PC-9 (cell line): ENCODE measurements at regions of chr3 and their contacts with region 1.

Region 1: DNA sequence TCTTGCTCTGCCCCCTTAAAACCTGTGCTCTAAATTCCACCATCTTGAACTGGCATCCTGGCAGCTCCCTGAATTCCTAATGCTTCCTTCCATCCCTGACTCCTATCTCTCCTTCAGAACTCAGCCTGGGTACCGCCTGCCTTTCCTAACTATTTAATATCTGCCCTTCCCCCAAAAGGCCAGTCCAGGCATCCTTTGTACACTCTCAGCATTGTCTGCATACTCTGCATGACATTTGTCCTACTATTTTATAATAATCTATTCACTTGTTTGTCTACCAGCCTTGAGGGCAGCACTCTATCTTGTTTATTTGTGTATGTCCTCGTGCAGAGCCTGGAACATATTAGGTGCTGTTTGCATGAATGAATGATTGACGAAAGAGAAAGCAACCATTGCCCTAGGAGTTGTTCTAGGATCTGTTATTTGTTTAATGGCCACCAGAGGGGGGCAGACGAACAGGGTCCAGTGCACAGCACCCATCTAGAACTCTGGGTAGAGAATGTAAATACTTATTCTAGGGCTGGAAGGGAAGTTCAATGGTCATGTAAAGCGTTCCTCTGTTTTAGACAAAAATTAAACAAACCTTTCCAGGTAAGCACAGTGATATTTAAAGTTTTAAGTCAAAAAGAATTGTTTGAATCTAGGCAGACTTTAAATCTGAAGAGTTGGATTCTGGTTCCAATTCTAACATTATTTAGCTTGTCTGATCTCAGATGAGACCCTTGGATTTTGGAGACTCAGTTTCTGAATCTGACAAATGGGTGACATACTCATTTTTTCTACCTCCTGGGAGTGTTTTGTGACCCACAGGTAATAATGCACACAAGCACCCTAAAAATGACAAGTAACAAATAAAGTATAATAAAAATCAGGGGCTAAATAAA is 125.8 kb upstream of the GALNT15 start:
- DNase-seq: peak; percentile 25 to 36
- H3K4me3 ChIP-seq: peak overlapping the region; percentile 30; the same call in 1 of the 2 replicates
- H3K27ac ChIP-seq: no peak overlapping the region
- H3K4me1 ChIP-seq: no peaks in the 10 kb centered on the region
- H3K27me3 ChIP-seq: no peaks in the 10 kb centered on the region
- CTCF ChIP-seq: peak; percentile 93

Region 2: GRCh38 chr3:16090024-16090423 is 41.3 kb after region 1 on chr3:
- CTCF ChIA-PET with region 1: no interaction called
- POLR2A ChIA-PET with region 1: no interaction called
- intact Hi-C with region 1: no loop called
- DNase-seq: peak; percentile 5 to 80
- H3K4me3 ChIP-seq: no peak overlapping the region
- H3K27ac ChIP-seq: no peak overlapping the region
- H3K4me1 ChIP-seq: peaks cover 21% of the 10 kb centered on the region
- H3K27me3 ChIP-seq: no peaks in the 10 kb centered on the region
- CTCF ChIP-seq: no peak

Region 3: GRCh38 chr3:16177962-16178627 is 129.4 kb after region 1 on chr3:
- CTCF ChIA-PET with region 1: interaction called, 10 read pairs
- POLR2A ChIA-PET with region 1: no interaction called
- intact Hi-C with region 1: loop called (anchors 1 kb)
- DNase-seq: peak in 1 of 2 experiments; percentile 67
- H3K4me3 ChIP-seq: no peak overlapping the region
- H3K27ac ChIP-seq: no peak overlapping the region
- H3K4me1 ChIP-seq: no peaks in the 10 kb centered on the region
- H3K27me3 ChIP-seq: peaks cover 18% of the 10 kb centered on the region; the same call in 1 of the 2 replicates
- CTCF ChIP-seq: peak; percentile 95